Aorta (tissue), 5 donors: ENCODE measurements at regions of chr4 and their contacts with region 1.

Region 1: GRCh38 chr4:112765317-112765975 is 128.5 kb downstream of the LARP7 start:
- DNase-seq: no peak
- ATAC-seq: no peak
- H3K4me3 ChIP-seq: no peak overlapping the region
- H3K27ac ChIP-seq: no peak overlapping the region
- H3K4me1 ChIP-seq: no peaks in the 10 kb centered on the region
- H3K27me3 ChIP-seq: no peaks in the 10 kb centered on the region

Region 2: DNA sequence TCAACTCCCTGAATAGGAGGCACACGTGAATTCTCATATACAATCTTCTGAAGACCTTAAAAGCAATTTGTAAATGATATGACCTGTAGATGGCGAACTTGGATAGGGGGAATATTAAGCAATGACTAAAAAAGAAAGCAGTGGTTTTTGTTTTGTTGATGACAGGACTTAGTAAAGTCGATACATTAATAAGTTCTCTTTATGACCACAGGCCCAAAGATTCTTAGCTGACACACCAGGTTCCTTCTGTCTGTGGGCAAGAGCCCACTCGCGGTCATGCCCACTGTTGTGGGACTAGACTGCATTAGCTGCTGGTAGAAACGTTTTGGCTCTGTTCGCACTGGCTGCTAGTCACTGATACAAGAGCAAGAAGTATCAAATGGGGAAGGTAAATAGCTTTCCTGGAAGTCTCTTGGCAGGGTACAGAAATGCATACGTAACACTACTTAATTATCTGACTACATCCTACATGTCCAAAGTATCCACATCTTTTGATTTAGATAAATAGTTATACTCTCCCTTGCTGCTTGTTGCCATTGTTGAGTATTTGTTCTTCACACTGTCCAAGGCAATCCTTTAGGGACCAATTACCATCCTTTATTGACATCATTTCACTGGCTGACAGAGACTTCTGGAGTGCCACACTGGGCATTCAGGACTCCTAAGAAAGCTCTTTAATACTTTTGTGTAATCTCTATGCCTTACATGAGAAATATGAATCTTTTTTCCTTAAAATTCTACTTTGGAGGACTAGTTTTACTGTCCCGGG is 437.3 kb before region 1 on chr4:
- intact Hi-C with region 1: loop called in 1 of 2 experiments (anchors 10 kb)
- DNase-seq: no peak
- ATAC-seq: no peak
- H3K4me3 ChIP-seq: no peak overlapping the region
- H3K27ac ChIP-seq: no peak overlapping the region
- H3K4me1 ChIP-seq: no peaks in the 10 kb centered on the region
- H3K27me3 ChIP-seq: no peaks in the 10 kb centered on the region

Region 3: GRCh38 chr4:112636688-112637551 is 128.5 kb before region 1 on chr4 and contains the starts of genes LARP7 and ZGRF1:
- intact Hi-C with region 1: loop called (anchors 1 to 2 kb)
- DNase-seq: peak; percentile 100
- ATAC-seq: peak; percentile 99
- H3K4me3 ChIP-seq: peak within 1 kb of the TSS; percentile 92
- H3K27ac ChIP-seq: peak within 1 kb of the TSS; percentile 78 to 85
- H3K4me1 ChIP-seq: peaks cover 0 to 2% of the 10 kb centered on the region in 2 donors
- H3K27me3 ChIP-seq: no peaks in the 10 kb centered on the region
- total RNA-seq, gene LARP7: 38.6 to 41.3 TPM
- total RNA-seq, gene ZGRF1: 5.4 to 6.3 TPM

Region 4: DNA sequence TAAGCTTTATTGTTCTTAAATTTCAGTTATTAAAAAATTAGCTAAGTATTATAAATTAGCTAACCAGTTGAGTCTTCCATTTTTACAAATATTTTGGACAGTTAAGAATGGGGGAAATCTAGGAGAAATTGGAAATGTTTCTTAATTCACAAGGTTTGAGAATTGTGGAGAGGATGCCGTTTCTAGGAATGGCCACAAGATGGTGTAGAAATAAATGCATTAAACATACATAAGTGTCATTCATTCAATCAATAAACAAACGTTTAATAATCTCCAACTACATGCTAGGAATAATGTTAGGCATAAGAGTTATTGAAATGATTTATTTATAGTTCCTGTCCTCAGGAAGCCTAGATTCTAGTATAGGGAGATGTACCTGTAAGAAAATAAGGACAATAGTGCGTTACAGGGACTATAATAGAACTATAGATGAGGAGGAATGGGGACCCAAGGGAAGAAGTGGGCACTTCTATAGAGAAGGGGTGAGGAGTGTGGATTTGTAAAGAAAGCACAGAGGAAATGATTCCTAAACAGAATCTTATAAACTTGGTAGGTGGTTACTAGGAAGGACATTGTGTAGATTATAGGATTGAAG is 88.3 kb after region 1 on chr4:
- intact Hi-C with region 1: no loop called
- DNase-seq: no peak
- ATAC-seq: no peak
- H3K4me3 ChIP-seq: no peak overlapping the region
- H3K27ac ChIP-seq: no peak overlapping the region
- H3K4me1 ChIP-seq: peaks cover 0 to 2% of the 10 kb centered on the region in 2 donors
- H3K27me3 ChIP-seq: no peaks in the 10 kb centered on the region

Region 5: DNA sequence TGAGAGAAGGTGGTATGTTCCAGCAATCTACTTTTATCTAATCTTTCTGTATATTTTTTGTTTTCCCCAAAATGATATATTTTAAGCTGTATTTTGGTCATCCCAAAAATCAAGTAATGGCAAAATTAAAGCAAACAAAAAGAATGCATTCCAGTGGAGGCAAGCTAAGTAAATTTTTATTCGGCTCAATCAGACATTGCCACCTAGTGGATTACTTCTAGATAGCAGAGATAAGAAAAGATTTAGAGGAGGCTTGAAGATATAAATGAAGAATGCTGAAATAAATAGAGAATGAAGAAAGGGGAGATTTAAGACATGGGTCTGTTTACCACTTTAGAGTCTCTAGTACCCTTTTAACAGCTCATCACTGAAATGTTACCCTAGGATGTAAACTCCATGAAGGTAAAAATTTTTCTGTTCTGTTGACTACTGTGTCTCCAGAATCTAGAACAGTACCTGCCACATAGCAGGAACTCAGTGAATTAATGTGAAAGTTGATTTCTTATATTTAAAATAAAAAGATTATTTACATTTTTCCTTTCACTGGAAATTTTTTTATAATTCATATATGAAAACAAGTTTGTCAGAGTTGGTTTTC is 173.1 kb after region 1 on chr4:
- intact Hi-C with region 1: loop called (anchors 2 to 5 kb)
- DNase-seq: no peak
- ATAC-seq: peak; percentile 69
- H3K4me3 ChIP-seq: no peak overlapping the region
- H3K27ac ChIP-seq: no peak overlapping the region
- H3K4me1 ChIP-seq: no peaks in the 10 kb centered on the region
- H3K27me3 ChIP-seq: no peaks in the 10 kb centered on the region